GM12878 (cell line): ENCODE measurements at regions of chr14 and their contacts with region 1.

Region 1: DNA sequence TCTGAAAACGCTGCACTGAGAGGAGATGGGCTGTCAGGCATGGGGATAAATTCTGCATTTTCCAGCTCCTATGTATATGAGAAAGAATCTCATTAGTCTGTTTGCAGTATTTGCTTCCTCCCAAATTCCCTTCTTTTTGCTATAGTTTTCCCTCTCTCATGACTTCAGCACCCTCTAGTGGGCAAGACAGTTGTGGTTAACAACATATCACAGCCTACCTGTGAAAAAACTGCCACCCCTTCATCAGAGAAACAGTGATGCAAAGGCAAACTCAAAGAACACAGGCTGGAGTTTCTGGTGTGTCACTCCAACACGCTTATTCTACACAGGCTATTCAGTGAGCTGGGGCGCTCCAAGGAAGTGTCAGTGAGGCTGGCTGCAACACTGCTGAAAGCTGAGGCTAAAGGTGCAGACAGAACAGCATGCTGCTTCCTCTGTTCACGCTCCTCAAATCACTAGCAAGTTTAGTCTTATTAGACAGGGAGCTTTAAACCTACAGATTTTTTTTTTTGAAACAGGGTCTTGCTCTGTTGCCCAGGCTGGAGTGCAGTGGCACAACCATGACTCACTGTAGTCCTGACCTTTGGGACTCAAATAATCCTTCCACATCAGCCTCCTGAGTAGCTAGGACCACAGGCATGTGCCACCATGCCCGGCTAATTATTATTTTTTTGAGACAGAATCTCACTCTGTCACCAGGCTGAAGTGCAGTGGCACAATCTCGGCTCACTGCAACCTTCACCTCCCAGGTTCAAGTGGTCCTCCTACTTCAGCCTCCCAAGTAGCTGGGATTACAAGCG is 19.3 kb downstream of the ZC2HC1C start:
- DNase-seq: no peak
- ATAC-seq: peak; percentile 82
- H3K4me3 ChIP-seq: no peak overlapping the region
- H3K27ac ChIP-seq: no peak overlapping the region
- H3K4me1 ChIP-seq: no peaks in the 10 kb centered on the region
- H3K27me3 ChIP-seq: no peaks in the 10 kb centered on the region
- CTCF ChIP-seq: peak; percentile 64 to 83 (median 68)
- EP300 ChIP-seq: no peak
- POLR2A ChIP-seq: no peak
- RAD21 ChIP-seq: peak; percentile 91

Region 2: GRCh38 chr14:74881431-74882361 is 207.1 kb before region 1 on chr14 and contains the start of gene DLST:
- CTCF ChIA-PET with region 1: interaction called, 14 read pairs
- POLR2A ChIA-PET with region 1: no interaction called
- RAD21 ChIA-PET with region 1: no interaction called
- SMC1A ChIA-PET with region 1: interaction called, 4 read pairs
- in situ Hi-C with region 1: no loop called
- intact Hi-C with region 1: no loop called
- DNase-seq: peak; percentile 39
- ATAC-seq: peak; percentile 94
- H3K4me3 ChIP-seq: peak within 1 kb of the TSS; percentile 90
- H3K27ac ChIP-seq: peak within 1 kb of the TSS; percentile 81
- H3K4me1 ChIP-seq: peaks cover 8% of the 10 kb centered on the region
- H3K27me3 ChIP-seq: no peaks in the 10 kb centered on the region
- CTCF ChIP-seq: no peak
- EP300 ChIP-seq: no peak
- POLR2A ChIP-seq: peak; percentile 95
- RAD21 ChIP-seq: no peak
- polyA plus RNA-seq, gene DLST: 2.9 to 12.2 TPM

Region 3: GRCh38 chr14:74913986-74914573 is 174.7 kb before region 1 on chr14:
- CTCF ChIA-PET with region 1: interaction called, 24 read pairs
- POLR2A ChIA-PET with region 1: no interaction called
- RAD21 ChIA-PET with region 1: interaction called, 5 read pairs
- SMC1A ChIA-PET with region 1: interaction called, 7 read pairs
- in situ Hi-C with region 1: no loop called
- intact Hi-C with region 1: loop called (anchors 1 kb)
- DNase-seq: no peak
- ATAC-seq: peak; percentile 88
- H3K4me3 ChIP-seq: no peak overlapping the region
- H3K27ac ChIP-seq: no peak overlapping the region
- H3K4me1 ChIP-seq: no peaks in the 10 kb centered on the region
- H3K27me3 ChIP-seq: no peaks in the 10 kb centered on the region
- CTCF ChIP-seq: peak; percentile 62 to 76 (median 70)
- EP300 ChIP-seq: no peak
- POLR2A ChIP-seq: no peak
- RAD21 ChIP-seq: peak; percentile 76

Region 4: GRCh38 chr14:74954232-74954946 is 134.4 kb before region 1 on chr14:
- CTCF ChIA-PET with region 1: interaction called, 129 read pairs
- POLR2A ChIA-PET with region 1: no interaction called
- RAD21 ChIA-PET with region 1: interaction called, 6 read pairs
- SMC1A ChIA-PET with region 1: interaction called, 32 read pairs
- in situ Hi-C with region 1: no loop called
- intact Hi-C with region 1: no loop called
- DNase-seq: no peak
- ATAC-seq: no peak
- H3K4me3 ChIP-seq: no peak overlapping the region
- H3K27ac ChIP-seq: no peak overlapping the region
- H3K4me1 ChIP-seq: no peaks in the 10 kb centered on the region
- H3K27me3 ChIP-seq: no peaks in the 10 kb centered on the region; a peak in 2 of 4 replicates
- CTCF ChIP-seq: no peak
- EP300 ChIP-seq: no peak
- POLR2A ChIP-seq: no peak
- RAD21 ChIP-seq: no peak

Region 5: DNA sequence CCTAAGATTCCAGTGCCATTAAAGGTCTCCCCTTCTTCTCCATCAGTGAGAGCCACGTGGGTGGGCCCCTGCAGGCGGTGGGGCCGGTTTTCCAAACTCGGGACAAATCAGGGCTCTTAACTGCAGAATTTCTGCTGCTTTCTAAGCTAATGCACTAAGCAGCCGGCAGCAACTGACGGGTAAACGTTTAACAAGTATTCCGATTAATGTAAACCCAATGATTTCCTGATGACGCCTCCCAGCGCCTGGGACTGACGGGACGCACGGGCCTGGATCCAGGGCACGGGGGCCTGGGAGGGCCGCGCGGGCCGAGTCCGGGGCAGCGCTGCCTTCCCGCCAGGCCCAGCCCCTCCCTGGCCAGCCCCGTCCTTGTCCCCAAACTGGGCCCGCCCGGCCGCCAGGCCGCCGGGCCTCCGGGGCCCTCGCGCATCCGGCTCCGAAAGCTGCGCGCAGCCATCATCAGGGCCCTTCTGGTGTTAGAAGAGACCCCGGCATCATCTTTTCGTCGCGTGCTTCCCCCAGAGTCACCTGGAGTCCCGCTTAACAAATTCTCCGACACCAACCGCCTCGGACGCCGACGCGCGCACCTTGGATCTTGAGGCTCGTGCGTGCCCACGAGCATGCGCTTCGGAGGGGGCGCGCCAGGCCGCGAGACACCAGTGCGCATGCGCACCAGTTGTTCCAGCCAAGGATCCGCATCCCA is 37.8 kb before region 1 on chr14 and contains the start of gene MLH3:
- CTCF ChIA-PET with region 1: interaction called, 12 read pairs
- POLR2A ChIA-PET with region 1: no interaction called
- RAD21 ChIA-PET with region 1: interaction called, 3 read pairs
- SMC1A ChIA-PET with region 1: no interaction called
- in situ Hi-C with region 1: no loop called
- intact Hi-C with region 1: no loop called
- DNase-seq: no peak
- ATAC-seq: peak; percentile 94
- H3K4me3 ChIP-seq: peak within 1 kb of the TSS; percentile 65
- H3K27ac ChIP-seq: peak within 1 kb of the TSS; percentile 77
- H3K4me1 ChIP-seq: no peaks in the 10 kb centered on the region
- H3K27me3 ChIP-seq: no peaks in the 10 kb centered on the region
- CTCF ChIP-seq: no peak
- EP300 ChIP-seq: no peak
- POLR2A ChIP-seq: peak; percentile 82
- RAD21 ChIP-seq: no peak
- polyA plus RNA-seq, gene MLH3: 17.9 to 23.4 TPM

Region 6: DNA sequence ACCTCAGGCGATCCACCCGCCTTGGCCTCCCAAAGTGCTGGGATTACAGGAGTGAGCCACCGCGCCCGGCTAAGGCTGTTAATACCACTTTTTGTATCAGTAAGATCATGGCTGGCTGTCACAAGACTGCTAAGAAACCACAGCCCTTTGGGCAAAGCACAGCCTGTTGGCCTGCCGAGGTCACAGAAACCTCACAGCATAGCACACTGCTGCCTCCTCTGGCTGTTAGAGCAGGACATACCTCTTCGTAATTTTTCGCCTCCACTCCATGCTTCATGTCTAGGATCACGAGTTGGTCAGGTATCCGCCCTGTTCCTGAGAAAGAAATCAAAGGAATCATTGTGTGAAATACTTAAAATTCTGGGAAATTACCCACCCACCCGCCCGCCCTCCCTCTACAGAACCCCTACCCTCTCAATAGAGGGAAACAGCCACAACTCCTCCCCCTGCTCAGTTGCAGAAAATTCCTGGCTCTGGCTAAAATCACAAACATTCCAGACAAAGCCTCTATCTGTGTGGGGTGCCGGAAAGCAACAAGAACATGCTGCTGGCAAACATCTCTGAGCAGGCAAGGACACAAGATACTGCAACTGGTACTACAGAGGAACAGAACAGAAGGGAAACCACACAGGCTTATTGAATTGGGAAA is 58.8 kb after region 1 on chr14:
- CTCF ChIA-PET with region 1: no interaction called
- POLR2A ChIA-PET with region 1: no interaction called
- RAD21 ChIA-PET with region 1: no interaction called
- SMC1A ChIA-PET with region 1: no interaction called
- in situ Hi-C with region 1: no loop called
- intact Hi-C with region 1: no loop called
- DNase-seq: no peak
- ATAC-seq: no peak
- H3K4me3 ChIP-seq: no peak overlapping the region
- H3K27ac ChIP-seq: no peak overlapping the region
- H3K4me1 ChIP-seq: no peaks in the 10 kb centered on the region
- H3K27me3 ChIP-seq: no peaks in the 10 kb centered on the region
- CTCF ChIP-seq: no peak
- EP300 ChIP-seq: no peak
- POLR2A ChIP-seq: no peak
- RAD21 ChIP-seq: no peak